Naive thymus-derived CD4-positive, alpha-beta T cell (primary cell): ENCODE measurements at regions of chr17 and their contacts with region 1.

Region 1: GRCh38 chr17:7915611-7916382 is at the start of gene RNF227:
- DNase-seq: peak; percentile 74 to 90 (median 83)
- ATAC-seq: peak; percentile 88
- H3K4me3 ChIP-seq: peak within 1 kb of the TSS; percentile 91
- H3K4me3 Mint-ChIP-seq: peak within 1 kb of the TSS; percentile 64 to 98 (median 88)
- H3K27ac ChIP-seq: peak within 1 kb of the TSS; percentile 75
- H3K27ac Mint-ChIP-seq: peak within 1 kb of the TSS; percentile 82 to 95 (median 92)
- H3K4me1 ChIP-seq: peaks cover 20 to 22% of the 10 kb centered on the region in 2 donors
- H3K4me1 Mint-ChIP-seq: peaks cover 22 to 37% (median 35%) of the 10 kb centered on the region in 7 donors
- H3K27me3 ChIP-seq: no peaks in the 10 kb centered on the region
- H3K27me3 Mint-ChIP-seq: no peaks in the 10 kb centered on the region
- total RNA-seq, gene RNF227: 2.6 to 8.2 (median 5.5) TPM

Region 2: DNA sequence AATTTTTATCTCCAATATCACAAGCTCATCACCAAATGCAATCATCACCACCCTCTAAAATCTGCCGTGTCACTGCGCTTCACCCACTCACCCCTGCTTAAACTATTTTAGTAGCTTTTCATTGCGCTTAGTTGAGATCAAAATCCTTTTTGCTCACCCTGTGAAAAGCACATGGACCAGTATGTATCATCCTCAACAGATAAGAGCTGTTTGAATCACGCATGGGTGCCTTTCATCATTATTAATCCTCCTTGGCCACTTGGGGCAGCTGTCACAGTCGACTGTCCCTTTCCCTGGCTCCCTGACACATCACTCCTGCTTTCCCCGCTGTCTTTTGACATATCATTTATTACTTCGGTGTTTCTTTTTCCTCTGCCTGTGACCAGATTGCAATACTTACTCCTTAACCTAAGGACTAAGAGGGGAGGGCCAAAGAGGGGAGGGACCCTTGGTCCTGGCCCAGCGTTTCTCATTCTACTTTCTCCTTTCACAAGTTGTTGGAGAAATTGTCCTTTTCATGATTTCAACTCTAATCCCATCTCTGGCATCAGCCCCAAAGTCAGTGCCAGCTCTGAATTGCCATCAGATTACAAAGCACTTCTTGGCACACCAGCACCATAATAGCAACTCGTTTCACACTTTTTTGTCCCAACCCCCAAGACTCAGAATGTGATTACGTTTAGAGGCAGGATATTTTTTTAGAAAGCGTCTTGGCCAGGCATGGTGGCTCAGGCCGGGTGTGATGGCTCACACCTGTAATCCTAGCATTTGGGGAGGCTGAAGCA is 90.4 kb before region 1 on chr17:
- CTCF ChIA-PET with region 1: no interaction called
- POLR2A ChIA-PET with region 1: no interaction called
- intact Hi-C with region 1: loop called in 1 of 2 experiments (anchors 1 kb)
- DNase-seq: no peak
- ATAC-seq: peak; percentile 47
- H3K4me3 ChIP-seq: no peak overlapping the region
- H3K4me3 Mint-ChIP-seq: no peak overlapping the region
- H3K27ac ChIP-seq: no peak overlapping the region
- H3K27ac Mint-ChIP-seq: peak overlapping the region in 1 of 9 donors; percentile 23
- H3K4me1 ChIP-seq: no peaks in the 10 kb centered on the region
- H3K4me1 Mint-ChIP-seq: peaks cover 0 to 5% (median 0%) of the 10 kb centered on the region in 7 donors
- H3K27me3 ChIP-seq: no peaks in the 10 kb centered on the region
- H3K27me3 Mint-ChIP-seq: peaks cover 0 to 32% (median 0%) of the 10 kb centered on the region in 5 donors

Region 3: GRCh38 chr17:7856883-7857723 is 58.7 kb before region 1 on chr17 and contains the start of gene NAA38:
- CTCF ChIA-PET with region 1: interaction called, 5 read pairs
- POLR2A ChIA-PET with region 1: interaction called, 13 read pairs
- intact Hi-C with region 1: loop called (anchors 1 kb)
- DNase-seq: peak; percentile 81 to 99 (median 97)
- ATAC-seq: peak; percentile 87
- H3K4me3 ChIP-seq: peak within 1 kb of the TSS; percentile 70
- H3K4me3 Mint-ChIP-seq: no peak within 1 kb of the TSS
- H3K27ac ChIP-seq: peak within 1 kb of the TSS; percentile 83
- H3K27ac Mint-ChIP-seq: no peak within 1 kb of the TSS
- H3K4me1 ChIP-seq: peaks cover 25 to 26% of the 10 kb centered on the region in 2 donors
- H3K4me1 Mint-ChIP-seq: peaks cover 0 to 16% (median 5%) of the 10 kb centered on the region in 7 donors
- H3K27me3 ChIP-seq: no peaks in the 10 kb centered on the region
- H3K27me3 Mint-ChIP-seq: no peaks in the 10 kb centered on the region
- total RNA-seq, gene NAA38: 22.1 to 63.8 (median 24.9) TPM

Region 4: GRCh38 chr17:7887482-7888183 is 28.2 kb before region 1 on chr17:
- CTCF ChIA-PET with region 1: interaction called, 4 read pairs
- POLR2A ChIA-PET with region 1: interaction called, 6 read pairs
- intact Hi-C with region 1: loop called (anchors 1 kb)
- DNase-seq: peak; percentile 41 to 96 (median 93)
- ATAC-seq: peak; percentile 83
- H3K4me3 ChIP-seq: peak overlapping the region; percentile 61
- H3K4me3 Mint-ChIP-seq: no peak overlapping the region
- H3K27ac ChIP-seq: peak overlapping the region; percentile 91
- H3K27ac Mint-ChIP-seq: no peak overlapping the region
- H3K4me1 ChIP-seq: peaks cover 28 to 29% of the 10 kb centered on the region in 2 donors
- H3K4me1 Mint-ChIP-seq: peaks cover 0 to 17% (median 8%) of the 10 kb centered on the region in 7 donors
- H3K27me3 ChIP-seq: no peaks in the 10 kb centered on the region
- H3K27me3 Mint-ChIP-seq: no peaks in the 10 kb centered on the region

Region 5: DNA sequence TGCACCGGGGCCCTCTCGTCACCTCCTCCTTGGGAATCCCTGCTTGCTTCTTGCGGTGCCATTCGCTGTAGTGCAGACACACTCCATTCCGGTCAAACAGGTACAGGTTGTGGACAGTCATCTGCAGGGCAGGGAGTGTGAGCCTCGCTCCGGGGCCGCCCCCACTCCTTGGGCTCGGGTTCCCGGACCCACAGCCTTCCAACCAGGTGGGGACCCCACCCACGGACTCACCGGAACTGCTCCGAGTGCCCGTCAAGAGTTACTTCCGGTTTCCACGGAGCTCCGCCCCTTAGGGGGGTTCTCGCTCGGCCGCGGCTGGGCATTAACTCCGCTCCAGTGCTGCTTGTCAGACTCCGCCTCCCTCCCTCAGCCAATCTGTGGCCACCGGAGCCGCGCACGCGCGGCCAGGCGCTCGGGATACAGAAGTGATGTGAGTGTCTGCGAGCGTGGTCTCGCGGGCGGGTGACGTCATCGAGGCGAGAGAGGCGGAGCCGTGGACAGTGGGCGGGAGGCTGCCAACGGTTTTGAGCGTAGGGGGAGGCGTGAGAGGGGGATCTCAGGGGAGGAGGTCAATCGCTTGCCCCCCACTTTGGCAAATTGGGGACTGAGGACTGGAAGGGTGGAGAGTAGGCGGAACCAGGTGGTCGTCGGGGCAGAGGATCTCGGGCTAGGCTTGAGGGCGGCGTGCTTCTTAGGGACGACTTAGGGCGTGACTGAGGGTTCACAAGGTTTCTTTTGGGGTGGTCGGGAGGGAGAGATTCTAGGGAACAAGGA is 16.1 kb after region 1 on chr17 and contains the starts of genes CNTROB and TRAPPC1:
- CTCF ChIA-PET with region 1: interaction called, 11 read pairs
- POLR2A ChIA-PET with region 1: interaction called, 74 read pairs
- intact Hi-C with region 1: loop called (anchors 1 kb)
- DNase-seq: peak; percentile 97 to 100 (median 99)
- ATAC-seq: peak; percentile 98
- H3K4me3 ChIP-seq: peak within 1 kb of the TSS; percentile 66
- H3K4me3 Mint-ChIP-seq: peak within 1 kb of the TSS; percentile 95 to 100 (median 96)
- H3K27ac ChIP-seq: peak within 1 kb of the TSS; percentile 88
- H3K27ac Mint-ChIP-seq: peak within 1 kb of the TSS; percentile 82 to 99 (median 96)
- H3K4me1 ChIP-seq: peaks cover 20 to 28% of the 10 kb centered on the region in 2 donors
- H3K4me1 Mint-ChIP-seq: peaks cover 31 to 60% (median 54%) of the 10 kb centered on the region in 7 donors
- H3K27me3 ChIP-seq: no peaks in the 10 kb centered on the region
- H3K27me3 Mint-ChIP-seq: no peaks in the 10 kb centered on the region
- total RNA-seq, gene CNTROB: 29.0 to 50.5 (median 33.6) TPM
- total RNA-seq, gene TRAPPC1: 71.4 to 216 (median 103) TPM

Region 6: DNA sequence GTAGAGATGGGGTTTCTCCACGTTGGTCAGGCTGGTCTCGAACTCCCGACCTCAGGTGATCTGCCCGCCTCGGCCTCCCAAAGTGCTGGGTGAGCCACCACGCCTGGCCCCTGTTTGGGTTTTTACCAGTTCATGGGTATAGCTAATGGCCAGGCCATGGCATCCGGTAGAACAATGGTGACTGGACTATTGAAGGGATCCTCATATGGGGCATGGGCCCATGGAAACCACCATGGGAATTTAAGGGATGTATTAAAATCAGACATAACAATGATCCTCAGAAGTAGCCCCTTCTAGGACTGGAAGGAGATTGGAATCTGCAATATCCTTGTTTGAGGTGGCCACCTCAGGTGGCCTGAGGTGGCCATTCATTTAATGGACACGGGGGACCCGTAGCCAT is 69.1 kb after region 1 on chr17:
- CTCF ChIA-PET with region 1: interaction called, 48 read pairs
- POLR2A ChIA-PET with region 1: interaction called, 26 read pairs
- intact Hi-C with region 1: loop called (anchors 1 kb)
- DNase-seq: peak in 1 of 9 donors; percentile 10
- ATAC-seq: no peak
- H3K4me3 ChIP-seq: no peak overlapping the region
- H3K4me3 Mint-ChIP-seq: no peak overlapping the region
- H3K27ac ChIP-seq: no peak overlapping the region
- H3K27ac Mint-ChIP-seq: no peak overlapping the region
- H3K4me1 ChIP-seq: peaks cover 0 to 8% of the 10 kb centered on the region in 2 donors
- H3K4me1 Mint-ChIP-seq: peaks cover 8 to 17% (median 10%) of the 10 kb centered on the region in 7 donors
- H3K27me3 ChIP-seq: no peaks in the 10 kb centered on the region
- H3K27me3 Mint-ChIP-seq: peaks cover 0 to 20% (median 0%) of the 10 kb centered on the region in 5 donors

Region 7: GRCh38 chr17:8041249-8041928 is 125.6 kb after region 1 on chr17:
- CTCF ChIA-PET with region 1: interaction called, 3 read pairs
- POLR2A ChIA-PET with region 1: no interaction called
- intact Hi-C with region 1: loop called (anchors 1 kb)
- DNase-seq: peak in 7 of 9 donors; percentile 18 to 56 (median 47)
- ATAC-seq: peak; percentile 69
- H3K4me3 ChIP-seq: no peak overlapping the region
- H3K4me3 Mint-ChIP-seq: no peak overlapping the region
- H3K27ac ChIP-seq: no peak overlapping the region
- H3K27ac Mint-ChIP-seq: no peak overlapping the region
- H3K4me1 ChIP-seq: no peaks in the 10 kb centered on the region
- H3K4me1 Mint-ChIP-seq: peaks cover 0 to 16% (median 0%) of the 10 kb centered on the region in 7 donors
- H3K27me3 ChIP-seq: peaks cover 0 to 13% of the 10 kb centered on the region in 2 donors
- H3K27me3 Mint-ChIP-seq: peaks cover 18 to 30% (median 23%) of the 10 kb centered on the region in 5 donors

Region 8: GRCh38 chr17:9402590-9403199 is 1486.9 kb after region 1 on chr17:
- CTCF ChIA-PET with region 1: no interaction called
- POLR2A ChIA-PET with region 1: no interaction called
- intact Hi-C with region 1: no loop called
- DNase-seq: peak in 1 of 9 donors; percentile 23
- ATAC-seq: no peak
- H3K4me3 ChIP-seq: no peak overlapping the region
- H3K4me3 Mint-ChIP-seq: no peak overlapping the region
- H3K27ac ChIP-seq: no peak overlapping the region
- H3K27ac Mint-ChIP-seq: no peak overlapping the region
- H3K4me1 ChIP-seq: no peaks in the 10 kb centered on the region
- H3K4me1 Mint-ChIP-seq: no peaks in the 10 kb centered on the region
- H3K27me3 ChIP-seq: no peaks in the 10 kb centered on the region
- H3K27me3 Mint-ChIP-seq: no peaks in the 10 kb centered on the region